Activated CD4-positive, alpha-beta T cell treated with anti-CD3 and anti-CD28 coated beads for 36 hours (primary cell): ENCODE measurements at regions of chr12 and their contacts with region 1.

Region 1: DNA sequence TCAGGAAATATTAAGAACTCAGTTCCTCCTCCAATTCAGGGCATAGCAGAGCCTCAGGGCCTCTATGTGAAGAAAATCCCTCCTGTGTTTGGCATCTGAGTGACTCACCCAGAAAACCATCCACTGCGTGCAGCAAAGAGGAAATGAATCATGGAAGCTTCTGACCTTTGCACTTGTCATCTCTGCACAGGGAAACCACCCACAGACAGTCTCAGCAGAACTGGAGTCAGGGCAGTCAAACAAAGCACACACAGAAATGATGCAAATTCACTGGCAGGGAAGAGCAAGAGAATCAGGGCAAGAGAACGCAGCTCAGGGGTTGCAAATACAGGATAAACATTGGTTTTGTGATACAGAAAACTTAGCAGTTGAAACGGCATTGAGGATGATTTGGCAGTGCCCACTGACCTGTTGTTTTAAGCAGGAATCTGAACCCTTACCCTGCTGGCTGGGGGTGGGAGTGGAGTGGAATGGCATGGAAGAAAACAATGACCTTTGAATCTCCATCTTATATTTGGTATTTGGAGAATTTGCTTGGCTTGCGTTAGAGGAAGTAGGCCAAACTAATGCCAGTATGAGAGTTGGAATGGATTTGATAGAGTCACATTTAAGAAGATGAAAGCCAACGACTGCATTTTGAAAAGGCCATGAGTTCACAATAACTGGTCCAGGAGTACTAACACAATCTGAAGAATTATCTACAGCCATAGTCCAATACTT is 53.5 kb downstream of the PHLDA1 start:
- DNase-seq: peak; percentile 85
- ATAC-seq: peak; percentile 80
- H3K4me3 Mint-ChIP-seq: peak overlapping the region; percentile 59
- H3K27ac Mint-ChIP-seq: peak overlapping the region; percentile 100
- H3K4me1 Mint-ChIP-seq: peaks cover 69% of the 10 kb centered on the region
- H3K27me3 Mint-ChIP-seq: no peaks in the 10 kb centered on the region

Region 2: GRCh38 chr12:75511116-75512048 is 466.7 kb before region 1 on chr12 and contains the start of gene KRR1:
- CTCF ChIA-PET with region 1: no interaction called
- POLR2A ChIA-PET with region 1: no interaction called
- intact Hi-C with region 1: loop called in 1 of 2 experiments (anchors 1 kb)
- DNase-seq: peak; percentile 94
- ATAC-seq: peak; percentile 96
- H3K4me3 Mint-ChIP-seq: peak within 1 kb of the TSS; percentile 100
- H3K27ac Mint-ChIP-seq: peak within 1 kb of the TSS; percentile 99
- H3K4me1 Mint-ChIP-seq: peaks cover 33% of the 10 kb centered on the region
- H3K27me3 Mint-ChIP-seq: no peaks in the 10 kb centered on the region
- total RNA-seq, gene KRR1: 122 to 147 TPM

Region 3: GRCh38 chr12:75666939-75667334 is 311.2 kb before region 1 on chr12:
- CTCF ChIA-PET with region 1: no interaction called
- POLR2A ChIA-PET with region 1: no interaction called
- intact Hi-C with region 1: no loop called
- DNase-seq: no peak
- ATAC-seq: no peak
- H3K4me3 Mint-ChIP-seq: no peak overlapping the region
- H3K27ac Mint-ChIP-seq: no peak overlapping the region
- H3K4me1 Mint-ChIP-seq: no peaks in the 10 kb centered on the region
- H3K27me3 Mint-ChIP-seq: no peaks in the 10 kb centered on the region

Region 4: GRCh38 chr12:75781532-75782046 is 196.5 kb before region 1 on chr12:
- CTCF ChIA-PET with region 1: no interaction called
- POLR2A ChIA-PET with region 1: interaction called, 10 read pairs
- intact Hi-C with region 1: no loop called
- DNase-seq: peak; percentile 19
- ATAC-seq: peak; percentile 84
- H3K4me3 Mint-ChIP-seq: no peak overlapping the region
- H3K27ac Mint-ChIP-seq: no peak overlapping the region
- H3K4me1 Mint-ChIP-seq: peaks cover 11% of the 10 kb centered on the region
- H3K27me3 Mint-ChIP-seq: peaks cover 19% of the 10 kb centered on the region

Region 5: GRCh38 chr12:75913502-75914351 is 64.4 kb before region 1 on chr12:
- CTCF ChIA-PET with region 1: no interaction called
- POLR2A ChIA-PET with region 1: no interaction called
- intact Hi-C with region 1: loop called (anchors 1 kb)
- DNase-seq: peak; percentile 74
- ATAC-seq: peak; percentile 94
- H3K4me3 Mint-ChIP-seq: no peak overlapping the region
- H3K27ac Mint-ChIP-seq: no peak overlapping the region
- H3K4me1 Mint-ChIP-seq: peaks cover 21% of the 10 kb centered on the region
- H3K27me3 Mint-ChIP-seq: peaks cover 1% of the 10 kb centered on the region

Region 6: GRCh38 chr12:75923964-75924666 is 54.0 kb before region 1 on chr12:
- CTCF ChIA-PET with region 1: no interaction called
- POLR2A ChIA-PET with region 1: no interaction called
- intact Hi-C with region 1: no loop called
- DNase-seq: no peak
- ATAC-seq: no peak
- H3K4me3 Mint-ChIP-seq: no peak overlapping the region
- H3K27ac Mint-ChIP-seq: no peak overlapping the region
- H3K4me1 Mint-ChIP-seq: no peaks in the 10 kb centered on the region
- H3K27me3 Mint-ChIP-seq: peaks cover 30% of the 10 kb centered on the region

Region 7: DNA sequence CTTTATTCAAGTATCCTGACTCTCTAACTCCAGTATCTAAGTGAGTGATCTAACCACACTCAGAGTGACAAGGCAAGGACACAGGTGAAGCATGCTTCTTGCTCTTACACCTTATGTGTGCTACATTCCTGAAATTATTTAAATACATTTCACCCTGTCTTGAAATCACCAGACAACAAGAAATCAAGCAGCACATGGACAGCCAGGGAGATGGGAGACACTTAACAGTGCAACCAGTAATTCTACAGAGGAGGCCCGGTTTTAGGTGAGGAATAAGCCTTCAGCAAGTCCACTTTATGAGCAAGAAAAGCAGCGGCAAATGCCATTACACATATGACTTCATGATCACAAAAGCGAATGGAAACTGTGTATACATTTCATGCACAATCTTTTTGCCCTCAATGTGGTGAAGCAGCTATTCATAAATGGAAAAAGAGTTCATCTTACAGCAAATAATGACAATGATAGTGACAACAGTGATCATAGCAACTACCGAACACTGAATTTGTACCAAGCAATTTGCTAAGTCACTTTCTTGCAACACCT is 16.1 kb after region 1 on chr12:
- CTCF ChIA-PET with region 1: interaction called, 4 read pairs
- POLR2A ChIA-PET with region 1: interaction called, 3 read pairs
- intact Hi-C with region 1: loop called (anchors 1 kb)
- DNase-seq: peak; percentile 53
- ATAC-seq: peak; percentile 86
- H3K4me3 Mint-ChIP-seq: no peak overlapping the region
- H3K27ac Mint-ChIP-seq: peak overlapping the region; percentile 34
- H3K4me1 Mint-ChIP-seq: peaks cover 26% of the 10 kb centered on the region
- H3K27me3 Mint-ChIP-seq: peaks cover 7% of the 10 kb centered on the region

Region 8: DNA sequence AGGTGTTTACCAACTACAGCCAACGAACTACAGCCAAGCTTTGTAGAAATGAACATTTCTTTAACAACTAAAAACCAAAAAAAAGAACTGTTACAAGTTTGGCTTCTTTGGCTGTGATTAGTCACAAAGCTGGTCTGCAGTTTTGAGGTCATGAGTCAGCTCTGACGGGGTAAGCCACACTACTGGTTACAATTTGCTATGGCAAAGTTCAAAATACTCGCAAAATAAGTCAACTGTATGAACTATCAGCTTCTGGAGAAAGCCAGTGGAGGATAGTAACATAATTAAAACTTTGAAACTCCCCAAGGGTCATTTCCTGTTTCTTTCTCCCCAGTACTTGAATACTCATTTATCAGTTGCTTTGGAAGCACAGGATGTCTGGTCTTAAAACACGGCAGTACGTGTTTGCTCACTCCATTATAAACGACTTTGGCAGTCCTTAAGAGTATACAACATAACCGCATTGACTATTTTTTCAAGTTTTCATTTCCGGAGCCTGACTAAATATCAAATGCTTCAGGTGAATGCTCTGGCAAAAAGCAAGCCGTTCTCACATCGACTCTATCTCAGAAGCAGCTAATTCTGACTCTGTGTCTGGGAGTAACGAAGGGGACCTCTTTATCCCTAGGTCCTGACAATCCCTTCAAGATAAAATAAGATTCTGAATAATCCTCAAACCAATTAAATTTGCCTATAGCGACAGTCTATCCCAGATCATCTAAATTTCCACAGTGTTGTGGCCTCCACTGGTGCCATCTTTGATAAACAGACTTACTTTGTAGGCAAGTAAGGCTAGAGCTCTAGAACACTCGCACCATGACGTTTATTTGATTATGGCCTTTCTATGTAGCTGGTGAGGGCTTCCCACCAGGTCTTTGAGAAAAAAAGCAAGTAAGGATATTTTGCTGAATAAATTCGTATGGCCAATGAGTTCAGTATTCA is 42.9 kb after region 1 on chr12:
- CTCF ChIA-PET with region 1: interaction called, 7 read pairs
- POLR2A ChIA-PET with region 1: interaction called, 14 read pairs
- intact Hi-C with region 1: loop called (anchors 1 kb)
- DNase-seq: peak; percentile 88
- ATAC-seq: peak; percentile 79
- H3K4me3 Mint-ChIP-seq: peak overlapping the region; percentile 54
- H3K27ac Mint-ChIP-seq: peak overlapping the region; percentile 99
- H3K4me1 Mint-ChIP-seq: peaks cover 56% of the 10 kb centered on the region
- H3K27me3 Mint-ChIP-seq: peaks cover 1% of the 10 kb centered on the region

Region 9: GRCh38 chr12:76078748-76079147 is 100.6 kb after region 1 on chr12:
- CTCF ChIA-PET with region 1: no interaction called
- POLR2A ChIA-PET with region 1: no interaction called
- intact Hi-C with region 1: no loop called
- DNase-seq: no peak
- ATAC-seq: no peak
- H3K4me3 Mint-ChIP-seq: no peak overlapping the region
- H3K27ac Mint-ChIP-seq: peak overlapping the region; percentile 48
- H3K4me1 Mint-ChIP-seq: peaks cover 66% of the 10 kb centered on the region
- H3K27me3 Mint-ChIP-seq: no peaks in the 10 kb centered on the region

Region 10: DNA sequence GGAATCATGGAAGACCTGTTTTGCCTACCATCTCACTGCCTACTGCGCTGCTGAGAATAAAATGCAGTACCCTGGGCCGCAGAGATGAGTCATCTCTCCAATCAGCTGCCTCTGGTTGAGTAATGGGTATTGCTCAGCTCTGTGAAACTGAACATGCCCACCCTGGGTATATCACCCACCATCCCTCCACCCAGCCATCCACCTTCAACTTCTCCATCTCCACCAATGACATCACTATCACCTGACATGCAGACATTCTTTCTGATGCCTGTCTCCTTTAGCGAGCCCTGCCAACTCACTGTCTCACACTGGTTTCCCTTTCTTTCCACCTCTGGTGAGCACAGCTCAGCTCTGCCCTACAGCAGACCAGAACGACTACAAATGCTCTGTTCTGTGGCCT is 1053.6 kb after region 1 on chr12:
- CTCF ChIA-PET with region 1: no interaction called
- POLR2A ChIA-PET with region 1: no interaction called
- intact Hi-C with region 1: no loop called
- DNase-seq: peak; percentile 7
- ATAC-seq: peak; percentile 45
- H3K4me3 Mint-ChIP-seq: no peak overlapping the region
- H3K27ac Mint-ChIP-seq: no peak overlapping the region
- H3K4me1 Mint-ChIP-seq: peaks cover 13% of the 10 kb centered on the region
- H3K27me3 Mint-ChIP-seq: no peaks in the 10 kb centered on the region